ENCODE measurements at regions of chr17 and their contacts with region 1.

Region 1: GRCh38 chr17:33927732-33928133 is 327.4 kb upstream of the CCL2 start:
- DNase-seq: no peak
- ATAC-seq: peak in 1 of 2 donors; percentile 19

Region 2: DNA sequence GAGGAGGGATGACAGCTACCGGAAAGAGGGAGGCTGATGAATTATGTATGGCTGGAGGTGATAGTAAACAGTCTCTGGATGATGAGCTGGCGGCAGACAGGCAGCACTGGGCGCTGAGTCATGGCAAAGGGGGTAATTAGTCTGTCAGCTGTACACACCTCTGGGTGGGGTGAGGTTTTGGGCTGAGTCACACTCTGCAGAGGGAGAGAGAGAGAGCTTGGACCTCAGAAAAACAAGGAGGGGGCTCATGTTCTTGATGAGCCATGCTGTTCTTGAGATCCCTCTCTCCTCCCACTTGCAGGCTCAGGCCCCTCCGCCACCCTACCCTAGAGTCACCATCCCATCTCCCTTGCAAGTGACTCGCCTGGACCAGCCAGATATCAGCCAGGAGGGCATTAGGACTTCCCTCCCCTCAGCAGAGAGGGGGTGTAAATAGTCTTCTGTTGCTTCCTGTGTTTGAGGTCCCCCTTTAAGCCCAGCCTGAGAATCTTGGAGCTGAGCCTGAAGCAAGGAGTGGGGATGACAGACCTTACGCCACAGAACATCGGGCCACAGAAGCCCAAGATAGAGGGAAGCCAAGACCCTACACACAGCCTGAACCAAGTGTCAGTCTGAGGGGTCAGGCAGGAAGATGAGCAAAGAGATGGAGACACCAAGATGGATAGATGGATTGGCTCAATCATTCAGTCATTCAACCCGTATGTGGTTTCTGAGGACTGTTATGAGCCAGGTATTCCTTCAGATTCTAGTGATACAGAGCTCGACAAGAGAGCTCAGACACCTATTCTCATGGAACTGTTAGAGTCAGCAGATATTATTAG is 55.8 kb before region 1 on chr17:
- intact Hi-C with region 1: no loop called
- DNase-seq: no peak
- ATAC-seq: peak; percentile 44 to 94

Region 3: DNA sequence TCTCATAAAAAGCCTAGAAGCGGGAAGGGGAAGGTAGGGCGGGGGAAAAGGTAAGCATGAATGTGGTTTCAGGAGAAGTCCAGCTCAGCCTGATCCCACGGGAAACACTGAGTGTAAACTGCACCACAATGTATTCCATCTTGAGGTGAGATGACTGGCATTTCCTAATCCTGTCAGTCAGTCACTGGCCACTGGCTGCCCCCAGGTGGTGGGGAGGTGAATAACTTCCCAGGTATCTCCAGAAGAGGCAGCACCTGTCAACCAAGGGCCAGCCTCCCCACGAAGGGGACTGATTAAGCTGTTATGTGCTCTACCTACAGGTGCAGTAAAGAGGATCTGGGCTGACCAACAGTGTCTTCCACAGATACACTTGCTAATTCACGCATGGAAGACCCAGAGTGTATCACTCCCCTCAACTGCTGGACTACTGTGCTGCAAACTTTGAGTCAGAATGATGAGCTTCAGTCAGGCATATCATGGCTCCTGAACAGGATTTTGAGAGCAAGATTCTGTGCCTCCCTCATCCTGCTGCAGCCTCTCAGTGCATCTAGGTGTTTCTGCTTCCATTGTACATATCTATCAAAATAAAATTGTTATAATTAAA is 218.8 kb after region 1 on chr17:
- intact Hi-C with region 1: loop called (anchors 1 to 10 kb)
- DNase-seq: peak; percentile 42
- ATAC-seq: peak in 1 of 2 donors; percentile 42